Ascending aorta (tissue), 2 donors: ENCODE measurements at regions of chr14 and their contacts with region 1.

Region 1: DNA sequence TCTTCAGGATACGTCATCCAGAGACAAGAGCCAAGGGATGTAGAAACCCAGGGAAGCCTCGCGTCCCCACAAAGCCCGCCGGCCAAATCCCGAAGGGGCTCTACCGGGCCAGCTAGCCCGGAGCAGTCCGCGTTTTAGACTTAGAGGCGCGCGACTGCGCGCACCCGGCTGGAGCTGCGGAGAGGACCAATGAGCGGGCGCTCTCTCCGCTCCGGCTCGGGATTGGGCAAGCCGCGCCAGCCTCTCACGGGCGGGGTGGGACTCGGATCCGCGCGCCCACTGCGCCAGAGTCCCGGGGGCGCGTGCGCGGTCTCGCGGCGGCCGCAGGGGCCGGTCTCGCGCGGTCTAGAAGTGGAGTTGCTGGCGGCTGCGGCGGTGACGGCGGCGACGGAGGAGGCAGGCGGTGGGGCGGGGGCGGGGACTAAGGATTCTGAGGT is 239 bp upstream of the PALS1 start:
- DNase-seq: peak; percentile 89 to 98
- H3K4me3 ChIP-seq: peak overlapping the region; percentile 63 to 92
- H3K27ac ChIP-seq: peak overlapping the region; percentile 89 to 96
- H3K4me1 ChIP-seq: peaks cover 0 to 1% of the 10 kb centered on the region in 2 donors
- H3K27me3 ChIP-seq: no peaks in the 10 kb centered on the region
- CTCF ChIP-seq: no peak

Region 2: GRCh38 chr14:66507722-66508546 is 733.1 kb before region 1 on chr14 and contains the start of gene GPHN:
- intact Hi-C with region 1: loop called (anchors 1 kb)
- DNase-seq: peak; percentile 88 to 98
- H3K4me3 ChIP-seq: peak within 1 kb of the TSS; percentile 82 to 84
- H3K27ac ChIP-seq: peak within 1 kb of the TSS; percentile 85 to 92
- H3K4me1 ChIP-seq: peaks cover 0 to 2% of the 10 kb centered on the region in 2 donors
- H3K27me3 ChIP-seq: no peaks in the 10 kb centered on the region
- CTCF ChIP-seq: peak in 2 of 3 experiments; percentile 19 to 43
- total RNA-seq, gene GPHN: 3.3 TPM

Region 3: GRCh38 chr14:67191768-67192290 is 49.2 kb before region 1 on chr14:
- intact Hi-C with region 1: no loop called
- DNase-seq: no peak
- H3K4me3 ChIP-seq: no peak overlapping the region
- H3K27ac ChIP-seq: no peak overlapping the region
- H3K4me1 ChIP-seq: no peaks in the 10 kb centered on the region
- H3K27me3 ChIP-seq: no peaks in the 10 kb centered on the region
- CTCF ChIP-seq: no peak

Region 4: DNA sequence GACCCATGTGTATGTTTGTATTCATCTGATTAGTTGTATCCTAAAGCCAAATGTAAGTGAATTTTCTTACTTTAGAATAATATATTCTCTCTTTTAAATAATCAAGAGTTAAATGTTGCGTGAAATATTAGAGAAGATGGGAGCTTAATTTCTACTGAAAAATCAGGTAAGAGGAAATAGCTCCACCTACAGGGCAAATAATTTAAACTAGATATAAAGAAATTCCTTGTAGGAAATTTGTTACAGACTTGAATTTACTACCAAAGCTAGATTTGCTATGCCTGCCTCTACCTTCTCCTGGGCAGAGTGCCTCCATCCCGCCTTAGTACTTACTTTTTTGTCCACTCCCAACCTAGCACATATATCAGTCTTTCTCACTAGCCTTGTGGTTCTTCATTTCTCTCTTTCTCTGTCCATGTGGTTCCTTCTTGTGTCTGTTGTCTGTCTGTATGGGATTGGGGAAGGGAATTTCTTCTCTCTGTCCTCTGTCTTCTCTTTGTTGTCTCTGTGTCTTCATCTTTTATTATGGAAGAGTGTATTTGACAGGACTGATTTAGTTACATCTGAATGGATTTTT is 45.0 kb after region 1 on chr14:
- intact Hi-C with region 1: loop called (anchors 5 kb)
- DNase-seq: no peak
- H3K4me3 ChIP-seq: no peak overlapping the region
- H3K27ac ChIP-seq: no peak overlapping the region
- H3K4me1 ChIP-seq: no peaks in the 10 kb centered on the region
- H3K27me3 ChIP-seq: no peaks in the 10 kb centered on the region
- CTCF ChIP-seq: peak; percentile 31 to 61 (median 54)

Region 5: DNA sequence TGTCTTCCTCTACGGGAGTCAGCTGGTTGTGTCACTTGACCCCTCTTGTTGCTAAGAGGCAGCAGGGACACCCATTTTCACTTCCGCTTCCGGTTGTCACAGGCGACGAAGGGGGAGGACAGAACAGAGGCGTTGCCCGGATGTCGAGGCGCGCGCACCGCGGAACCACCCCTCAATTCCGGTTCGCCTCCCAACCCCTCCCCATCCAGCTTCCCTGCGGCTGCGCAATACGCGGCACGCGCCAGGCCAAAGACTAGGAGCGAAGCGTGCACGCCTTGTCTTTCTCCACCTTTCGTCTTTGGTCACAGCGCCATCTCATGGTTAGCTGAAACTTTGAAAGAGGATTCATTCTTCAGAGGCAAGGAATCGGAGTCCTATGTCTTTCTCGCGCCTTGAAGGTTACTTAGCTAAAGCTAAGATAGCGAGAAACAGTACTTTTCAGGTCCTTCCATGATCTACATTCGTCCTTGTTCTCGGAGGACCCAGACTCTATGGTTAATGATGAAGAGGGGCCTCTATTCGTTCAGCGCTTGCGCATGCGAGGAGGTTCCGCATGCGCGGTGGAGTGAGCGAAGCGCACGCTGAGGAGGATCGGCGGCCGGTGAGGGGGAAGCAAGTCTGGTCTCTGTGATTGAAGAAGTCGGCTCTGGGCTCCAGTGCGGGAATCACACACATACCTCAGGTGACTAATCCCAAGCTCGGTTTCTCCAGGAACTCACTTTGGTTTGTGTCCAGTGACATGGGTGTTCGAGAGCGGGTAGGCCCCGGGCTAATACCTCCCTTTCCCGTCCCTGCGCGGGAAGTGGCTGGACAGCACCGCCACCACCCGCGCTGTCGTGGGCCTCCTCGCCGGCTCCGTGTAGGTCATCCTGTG is 119.0 kb after region 1 on chr14 and contains the starts of genes ATP6V1D and EIF2S1:
- intact Hi-C with region 1: loop called (anchors 1 kb)
- DNase-seq: peak; percentile 97 to 99
- H3K4me3 ChIP-seq: peak within 1 kb of the TSS; percentile 77 to 85
- H3K27ac ChIP-seq: peak within 1 kb of the TSS; percentile 87 to 95
- H3K4me1 ChIP-seq: peaks cover 6 to 35% of the 10 kb centered on the region in 2 donors
- H3K27me3 ChIP-seq: no peaks in the 10 kb centered on the region
- CTCF ChIP-seq: peak; percentile 97 to 99 (median 98)
- total RNA-seq, gene ATP6V1D: 27.6 TPM
- total RNA-seq, gene EIF2S1: 55.1 TPM

Region 6: GRCh38 chr14:67674481-67675169 is 433.6 kb after region 1 on chr14 and contains the start of gene VTI1B:
- intact Hi-C with region 1: no loop called
- DNase-seq: peak in 1 of 2 donors; percentile 84
- H3K4me3 ChIP-seq: peak within 1 kb of the TSS; percentile 86 to 97
- H3K27ac ChIP-seq: peak within 1 kb of the TSS; percentile 96 to 100
- H3K4me1 ChIP-seq: peaks cover 3 to 25% of the 10 kb centered on the region in 2 donors
- H3K27me3 ChIP-seq: no peaks in the 10 kb centered on the region
- CTCF ChIP-seq: peak in 1 of 3 experiments; percentile 8
- total RNA-seq, gene VTI1B: 43.2 TPM

Region 7: DNA sequence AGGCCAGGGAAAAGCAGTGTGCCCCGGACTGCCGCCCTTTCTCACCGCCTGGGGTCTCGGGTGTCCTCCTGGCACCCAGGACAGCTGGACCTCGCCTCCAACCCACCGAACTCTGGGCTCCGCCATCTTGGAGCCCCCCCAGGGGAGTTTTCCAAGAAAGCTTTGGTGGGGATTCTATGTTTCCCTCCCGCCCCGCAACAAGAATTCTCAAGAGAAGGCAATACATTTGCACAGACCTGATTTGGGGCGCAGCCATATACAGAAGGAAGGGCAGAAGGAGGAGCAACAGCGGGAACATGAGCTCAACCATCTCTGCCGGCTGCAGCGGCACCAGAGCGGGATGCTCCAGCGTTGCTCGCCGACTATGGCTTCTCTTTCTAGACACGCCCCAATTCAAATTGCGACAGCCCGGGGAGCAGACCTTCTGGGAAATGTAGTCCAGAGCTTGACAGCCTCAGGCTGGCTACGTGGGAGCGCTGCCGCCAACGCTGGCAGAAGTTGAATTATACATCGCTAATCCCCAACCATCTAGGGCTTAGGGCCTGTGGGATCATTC is 454.5 kb after region 1 on chr14 and contains the start of gene RDH11:
- intact Hi-C with region 1: loop called (anchors 10 kb)
- DNase-seq: peak; percentile 70 to 94
- H3K4me3 ChIP-seq: peak within 1 kb of the TSS; percentile 68 to 88
- H3K27ac ChIP-seq: peak within 1 kb of the TSS; percentile 74 to 84
- H3K4me1 ChIP-seq: peaks cover 0 to 5% of the 10 kb centered on the region in 2 donors
- H3K27me3 ChIP-seq: no peaks in the 10 kb centered on the region
- CTCF ChIP-seq: no peak
- total RNA-seq, gene RDH11: 25.1 TPM